ENCODE measurements at regions of chr17 and their contacts with region 1.

Region 1: GRCh38 chr17:5226940-5227878 is 7.5 kb downstream of the SCIMP start:
- DNase-seq: peak in 27 of 35 experiments; percentile 4 to 65 (median 38)
- ATAC-seq: peak; percentile 61 to 89 (median 74)
- H3K4me3 ChIP-seq: no peak overlapping the region
- H3K4me3 Mint-ChIP-seq: peak overlapping the region; percentile 24 to 53 (median 40)
- H3K27ac ChIP-seq: peak overlapping the region; percentile 80
- H3K27ac Mint-ChIP-seq: peak overlapping the region; percentile 85 to 90
- H3K4me1 ChIP-seq: peaks cover 6 to 66% of the 10 kb centered on the region in 2 experiments
- H3K4me1 Mint-ChIP-seq: peaks cover 18 to 47% (median 28%) of the 10 kb centered on the region in 3 donors
- H3K27me3 ChIP-seq: no peaks in the 10 kb centered on the region
- H3K27me3 Mint-ChIP-seq: no peaks in the 10 kb centered on the region

Region 2: GRCh38 chr17:5184288-5184687 is 42.9 kb before region 1 on chr17:
- CTCF ChIA-PET with region 1: no interaction called
- POLR2A ChIA-PET with region 1: no interaction called
- DNase-seq: peak in 28 of 35 experiments; percentile 10 to 71 (median 36)
- ATAC-seq: peak in 2 of 4 experiments; percentile 11 to 22
- H3K4me3 ChIP-seq: no peak overlapping the region
- H3K4me3 Mint-ChIP-seq: no peak overlapping the region
- H3K27ac ChIP-seq: no peak overlapping the region
- H3K27ac Mint-ChIP-seq: no peak overlapping the region
- H3K4me1 ChIP-seq: peaks cover 0 to 10% of the 10 kb centered on the region in 2 experiments
- H3K4me1 Mint-ChIP-seq: peaks cover 0 to 4% (median 0%) of the 10 kb centered on the region in 3 donors
- H3K27me3 ChIP-seq: no peaks in the 10 kb centered on the region
- H3K27me3 Mint-ChIP-seq: no peaks in the 10 kb centered on the region

Region 3: GRCh38 chr17:5237541-5238016 is 10.4 kb after region 1 on chr17:
- CTCF ChIA-PET with region 1: interaction called in 1 of 2 experiments, 10 read pairs
- POLR2A ChIA-PET with region 1: interaction called in 1 of 2 experiments, 6 read pairs
- DNase-seq: peak in 19 of 35 experiments; percentile 4 to 64 (median 26)
- ATAC-seq: peak in 3 of 4 experiments; percentile 48 to 60 (median 52)
- H3K4me3 ChIP-seq: no peak overlapping the region
- H3K4me3 Mint-ChIP-seq: no peak overlapping the region
- H3K27ac ChIP-seq: peak overlapping the region; percentile 60
- H3K27ac Mint-ChIP-seq: peak overlapping the region; percentile 81 to 85
- H3K4me1 ChIP-seq: peaks cover 13 to 47% of the 10 kb centered on the region in 2 experiments
- H3K4me1 Mint-ChIP-seq: peaks cover 27 to 50% (median 36%) of the 10 kb centered on the region in 3 donors
- H3K27me3 ChIP-seq: no peaks in the 10 kb centered on the region
- H3K27me3 Mint-ChIP-seq: no peaks in the 10 kb centered on the region

Region 4: GRCh38 chr17:5249615-5250014 is 22.4 kb after region 1 on chr17:
- CTCF ChIA-PET with region 1: no interaction called
- POLR2A ChIA-PET with region 1: no interaction called
- DNase-seq: peak in 33 of 35 experiments; percentile 24 to 85 (median 58)
- ATAC-seq: peak; percentile 71 to 82 (median 73)
- H3K4me3 ChIP-seq: no peak overlapping the region
- H3K4me3 Mint-ChIP-seq: no peak overlapping the region
- H3K27ac ChIP-seq: no peak overlapping the region
- H3K27ac Mint-ChIP-seq: no peak overlapping the region
- H3K4me1 ChIP-seq: peaks cover under 1 to 10% of the 10 kb centered on the region in 2 experiments
- H3K4me1 Mint-ChIP-seq: peaks cover 7 to 13% (median 9%) of the 10 kb centered on the region in 3 donors
- H3K27me3 ChIP-seq: no peaks in the 10 kb centered on the region
- H3K27me3 Mint-ChIP-seq: no peaks in the 10 kb centered on the region

Measured in T-cell (primary cell).